GM18951 (cell line): ENCODE measurements at regions of chr7 and their contacts with region 1.

Region 1: DNA sequence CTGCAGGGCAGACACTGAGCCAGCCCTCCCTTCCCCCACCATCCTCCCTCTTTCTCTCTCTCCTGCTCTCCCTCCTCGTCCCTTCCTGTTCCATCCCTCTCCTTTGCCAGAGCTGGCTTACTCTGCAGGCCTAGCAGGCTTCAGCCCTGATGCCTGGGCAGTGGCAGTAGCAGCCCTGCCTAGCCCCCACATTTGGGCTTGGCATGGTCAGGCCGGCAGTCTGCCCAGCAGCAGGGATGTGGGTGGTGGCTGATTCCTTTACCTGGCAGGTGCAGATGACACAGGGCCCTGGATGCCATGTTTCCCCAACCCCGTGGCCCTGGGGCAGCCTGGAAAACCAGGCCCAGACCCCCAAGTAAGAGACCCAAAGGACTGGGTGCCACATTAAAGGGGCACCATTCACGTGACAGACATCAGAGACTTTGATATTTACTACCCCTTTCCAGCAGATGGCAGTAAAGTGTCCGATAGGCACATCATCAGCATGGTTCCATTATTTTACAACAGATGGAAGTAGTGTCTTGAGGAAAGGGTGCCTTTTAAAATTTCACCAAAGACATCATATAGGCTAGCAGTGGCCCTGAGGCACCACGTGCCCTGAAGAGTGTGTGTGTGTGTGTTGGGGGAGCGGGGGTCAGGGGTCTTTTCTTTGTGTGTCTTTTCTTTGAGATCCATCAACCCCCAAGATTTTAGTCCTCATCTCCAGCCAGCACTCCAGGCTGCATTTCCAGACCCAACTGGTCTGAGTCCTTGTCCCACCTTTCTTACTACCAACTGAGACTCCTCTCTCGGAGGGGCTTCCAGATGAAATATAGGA is 5.9 kb downstream of the KCP start:
- POLR2A ChIP-seq: no peak

Region 2: GRCh38 chr7:129091484-129092002 is 187.0 kb after region 1 on chr7:
- in situ Hi-C with region 1: loop called (anchors 10 kb)
- POLR2A ChIP-seq: no peak